Tibial artery (tissue), 4 donors: ENCODE measurements at regions of chr17 and their contacts with region 1.

Region 1: GRCh38 chr17:32783602-32784001 is 93.3 kb downstream of the MYO1D start:
- DNase-seq: no peak
- H3K4me3 ChIP-seq: no peak overlapping the region
- H3K27ac ChIP-seq: peak overlapping the region in 1 of 2 donors; percentile 1
- H3K4me1 ChIP-seq: peaks cover 0 to 7% (median 0%) of the 10 kb centered on the region in 4 donors
- H3K27me3 ChIP-seq: no peaks in the 10 kb centered on the region
- CTCF ChIP-seq: peak; percentile 66 to 92

Region 2: GRCh38 chr17:32575880-32576279 is 207.7 kb before region 1 on chr17:
- intact Hi-C with region 1: no loop called
- DNase-seq: no peak
- H3K4me3 ChIP-seq: no peak overlapping the region
- H3K27ac ChIP-seq: no peak overlapping the region
- H3K4me1 ChIP-seq: peaks cover 0 to 1% (median 0%) of the 10 kb centered on the region in 4 donors
- H3K27me3 ChIP-seq: no peaks in the 10 kb centered on the region
- CTCF ChIP-seq: no peak

Region 3: DNA sequence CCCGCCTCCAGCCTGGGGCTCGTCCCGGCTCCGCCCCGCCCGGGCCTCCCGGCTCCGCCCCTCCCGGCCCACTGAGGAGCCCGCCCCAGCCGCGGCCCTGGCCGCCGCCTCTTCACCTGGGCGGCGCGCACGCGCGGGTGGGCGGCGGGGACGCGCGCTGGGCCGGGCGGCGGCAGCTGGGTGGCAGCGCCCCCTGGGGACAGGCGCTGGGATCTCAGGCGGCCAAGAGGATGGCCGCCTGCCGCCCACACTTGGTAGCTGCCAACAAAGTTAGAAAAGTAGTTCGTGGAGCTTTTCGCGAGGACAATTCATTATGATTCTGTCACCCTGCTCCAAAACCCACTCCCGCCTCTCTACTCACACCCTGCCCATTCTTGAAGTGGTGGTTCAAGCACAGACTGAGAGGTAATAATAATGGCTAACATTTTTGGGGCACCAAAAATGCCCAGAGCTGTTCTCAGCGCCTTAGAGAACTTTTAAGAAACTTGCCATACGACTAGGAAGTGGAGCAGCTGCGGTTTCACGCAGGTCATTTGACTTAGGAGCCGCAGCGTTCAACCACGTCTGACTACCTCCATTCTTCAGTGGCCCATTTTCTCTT is 93.7 kb after region 1 on chr17:
- intact Hi-C with region 1: loop called (anchors 2 kb)
- DNase-seq: peak; percentile 87 to 96
- H3K4me3 ChIP-seq: peak overlapping the region; percentile 64 to 93
- H3K27ac ChIP-seq: peak overlapping the region; percentile 93 to 97
- H3K4me1 ChIP-seq: peaks cover 0 to 46% (median 15%) of the 10 kb centered on the region in 4 donors
- H3K27me3 ChIP-seq: no peaks in the 10 kb centered on the region
- CTCF ChIP-seq: peak; percentile 84 to 100

Region 4: GRCh38 chr17:32909787-32910369 is 126.3 kb after region 1 on chr17:
- intact Hi-C with region 1: loop called (anchors 10 kb)
- DNase-seq: peak; percentile 88
- H3K4me3 ChIP-seq: no peak overlapping the region
- H3K27ac ChIP-seq: peak overlapping the region in 1 of 2 donors; percentile 12
- H3K4me1 ChIP-seq: peaks cover 0 to 20% (median 13%) of the 10 kb centered on the region in 4 donors
- H3K27me3 ChIP-seq: no peaks in the 10 kb centered on the region
- CTCF ChIP-seq: peak; percentile 83 to 86